Right cardiac atrium (tissue), 5 donors: ENCODE measurements at regions of chr1 and their contacts with region 1.

Region 1: DNA sequence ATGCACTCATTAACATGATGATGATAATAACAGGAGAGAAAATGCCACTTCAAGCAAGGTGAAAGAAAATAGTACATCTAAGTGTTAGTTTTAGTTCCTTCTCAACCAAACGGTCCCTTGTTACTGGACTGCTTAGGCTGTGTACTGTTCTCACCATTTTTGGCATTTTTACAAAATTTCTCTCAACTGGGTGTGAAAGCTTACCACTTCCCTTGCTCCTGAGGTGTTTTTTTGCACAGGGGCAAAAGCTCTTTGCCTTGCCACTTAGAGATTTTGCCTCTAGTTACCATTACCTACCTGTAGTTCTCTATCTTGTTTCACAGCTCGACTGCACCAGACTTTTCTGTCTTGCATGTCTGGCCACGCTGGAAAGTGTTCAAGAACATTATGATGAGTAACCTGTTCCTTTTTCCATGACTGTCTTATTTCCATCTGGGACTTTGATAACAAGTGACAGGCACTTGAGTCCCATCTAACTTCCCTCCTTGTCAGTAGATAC is 10.7 kb downstream of the NEK7 start:
- DNase-seq: no peak
- ATAC-seq: peak; percentile 63 to 81
- H3K4me3 ChIP-seq: no peak overlapping the region
- H3K27ac ChIP-seq: peak overlapping the region; percentile 39
- H3K4me1 ChIP-seq: peaks cover 23% of the 10 kb centered on the region
- H3K27me3 ChIP-seq: no peaks in the 10 kb centered on the region

Region 2: DNA sequence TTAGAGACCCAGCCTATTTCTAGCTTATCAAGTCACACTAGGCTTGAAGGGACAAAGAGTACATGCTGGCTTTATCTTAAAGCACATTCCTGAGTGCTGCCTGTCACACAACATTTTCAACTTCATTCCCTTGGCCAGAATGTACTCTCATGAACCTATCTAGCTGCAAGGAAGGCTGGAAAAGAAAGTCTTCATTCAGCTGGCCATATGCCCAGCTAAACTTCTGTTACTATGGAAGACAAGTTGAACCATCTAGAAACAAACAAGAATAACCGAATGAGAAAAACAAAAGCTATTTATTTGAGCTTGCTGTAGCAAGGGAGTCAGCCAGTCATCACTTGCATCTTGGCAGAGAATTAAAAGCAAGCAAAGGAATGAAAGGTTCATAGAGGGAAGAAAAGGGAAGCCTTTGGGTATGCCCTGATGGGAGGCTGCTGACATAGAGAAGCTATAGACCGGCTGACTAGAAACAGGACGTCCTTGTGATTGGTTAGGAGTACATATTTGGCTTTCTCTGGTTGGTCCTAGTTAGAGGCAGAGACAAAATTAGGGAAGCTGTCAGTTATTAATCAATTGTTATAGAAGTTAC is 97.7 kb after region 1 on chr1:
- intact Hi-C with region 1: loop called in 1 of 4 experiments (anchors 10 kb)
- DNase-seq: peak in 1 of 3 donors; percentile 10
- ATAC-seq: peak; percentile 94
- H3K4me3 ChIP-seq: no peak overlapping the region
- H3K27ac ChIP-seq: peak overlapping the region; percentile 93
- H3K4me1 ChIP-seq: peaks cover 1% of the 10 kb centered on the region
- H3K27me3 ChIP-seq: no peaks in the 10 kb centered on the region